Caco-2 (cell line): ENCODE measurements at regions of chr4 and their contacts with region 1.

Region 1: DNA sequence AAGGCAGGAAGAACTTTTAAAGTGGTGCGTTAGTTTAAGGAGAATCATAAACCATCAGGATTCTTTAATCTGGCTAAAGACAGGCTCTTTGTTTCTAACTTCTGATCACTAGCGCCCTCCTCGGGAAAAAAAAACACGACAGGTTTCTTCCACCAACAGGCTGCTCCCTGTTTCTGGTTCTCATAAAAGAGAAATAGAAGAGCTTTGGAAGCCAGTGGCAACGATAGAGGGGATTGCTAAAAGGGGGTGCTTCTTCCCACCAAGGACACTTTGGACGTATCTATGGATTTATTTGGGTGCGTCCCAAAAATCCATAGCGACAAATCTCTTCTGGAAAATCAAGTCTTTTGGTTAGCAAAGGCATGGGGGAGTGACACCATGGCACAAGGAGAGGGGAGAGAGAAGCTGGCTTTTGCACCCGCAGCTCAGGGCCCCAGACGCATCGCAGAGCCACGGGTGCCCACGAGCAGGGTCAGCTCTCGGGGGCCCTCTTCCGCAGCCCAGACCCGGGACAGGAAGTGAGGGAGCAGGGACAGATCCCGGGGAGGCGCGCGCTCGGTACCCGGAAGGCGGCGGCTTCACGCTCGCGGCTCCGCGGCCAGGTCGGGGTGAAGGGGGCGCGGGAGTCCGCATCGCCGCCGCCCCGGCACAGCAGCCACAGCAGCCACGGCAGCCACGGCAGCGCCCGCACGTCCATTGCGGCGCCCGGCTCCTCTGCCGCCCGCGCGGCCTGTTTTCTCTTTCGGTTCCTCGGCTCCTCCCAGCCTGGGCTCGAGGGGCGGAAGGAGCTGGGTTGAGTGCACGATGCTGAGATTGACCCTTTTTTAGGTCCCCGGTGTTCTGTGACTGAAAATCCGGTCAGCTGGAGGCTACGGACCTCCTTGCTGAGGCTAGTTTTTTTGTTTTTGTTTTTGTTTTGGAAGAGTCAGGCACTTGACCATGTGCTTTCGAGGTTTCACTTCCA is at the start of gene CTSO:
- DNase-seq: peak; percentile 76 to 78
- H3K4me3 ChIP-seq: peak within 1 kb of the TSS; percentile 59
- H3K4me3 Mint-ChIP-seq: peak within 1 kb of the TSS; percentile 99
- H3K27ac Mint-ChIP-seq: peak within 1 kb of the TSS; percentile 96
- H3K4me1 ChIP-seq: peaks cover 31% of the 10 kb centered on the region
- H3K4me1 Mint-ChIP-seq: peaks cover 12% of the 10 kb centered on the region
- H3K27me3 ChIP-seq: no peaks in the 10 kb centered on the region
- H3K27me3 Mint-ChIP-seq: no peaks in the 10 kb centered on the region
- CTCF ChIP-seq: peak; percentile 47 to 57
- total RNA-seq, gene CTSO: 2.3 and 2.9 TPM in 2 replicates

Region 2: GRCh38 chr4:155403886-155404285 is 549.5 kb before region 1 on chr4:
- CTCF ChIA-PET with region 1: no interaction called
- POLR2A ChIA-PET with region 1: no interaction called
- intact Hi-C with region 1: loop called (anchors 2 kb)
- DNase-seq: peak in 1 of 2 experiments; percentile 20
- H3K4me3 ChIP-seq: no peak overlapping the region
- H3K4me3 Mint-ChIP-seq: no peak overlapping the region
- H3K27ac Mint-ChIP-seq: no peak overlapping the region
- H3K4me1 ChIP-seq: peaks cover 18% of the 10 kb centered on the region
- H3K4me1 Mint-ChIP-seq: peaks cover 18% of the 10 kb centered on the region
- H3K27me3 ChIP-seq: no peaks in the 10 kb centered on the region
- H3K27me3 Mint-ChIP-seq: no peaks in the 10 kb centered on the region
- CTCF ChIP-seq: peak in 1 of 2 experiments; percentile 28

Region 3: DNA sequence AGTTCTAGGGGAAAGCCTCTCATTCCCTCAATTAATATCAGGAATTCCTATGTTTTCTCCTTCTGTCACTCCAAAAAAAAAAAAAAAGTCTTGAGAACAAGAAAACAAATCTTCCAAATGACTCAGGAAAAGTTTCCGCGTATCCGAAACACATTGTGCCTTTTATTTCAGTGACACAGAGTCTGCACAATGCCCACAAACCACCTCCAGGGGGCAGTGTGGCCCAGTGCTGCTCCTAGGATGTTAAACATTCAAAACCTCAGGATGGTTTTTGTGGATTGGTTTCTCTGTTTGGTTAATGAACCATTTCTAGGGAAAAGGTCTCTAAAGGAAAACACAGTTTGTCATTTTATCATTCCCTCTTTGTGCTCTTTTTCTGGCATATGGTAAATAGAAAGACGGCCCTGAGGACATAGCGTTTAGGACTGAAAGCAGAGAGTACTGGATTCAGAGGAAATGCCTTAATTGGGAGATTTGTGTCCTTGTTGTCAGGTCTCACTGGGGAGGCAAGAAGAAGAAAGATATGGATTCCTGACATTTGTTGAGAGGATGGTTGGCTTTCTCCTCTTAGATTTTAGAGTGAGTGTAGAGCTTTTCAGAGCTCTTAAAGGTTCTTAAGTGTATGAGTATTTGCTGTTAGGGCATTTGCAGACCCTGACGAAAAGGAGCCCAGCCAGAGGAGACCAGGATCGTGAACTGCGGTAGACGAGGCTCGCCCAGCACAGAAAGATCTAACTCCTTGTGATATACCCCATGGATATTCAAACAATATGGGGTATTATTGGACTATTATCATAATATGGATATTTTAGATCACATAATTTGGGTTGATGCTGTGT is 510.9 kb before region 1 on chr4:
- CTCF ChIA-PET with region 1: no interaction called
- POLR2A ChIA-PET with region 1: no interaction called
- intact Hi-C with region 1: loop called (anchors 1 kb)
- DNase-seq: peak; percentile 50 to 72
- H3K4me3 ChIP-seq: no peak overlapping the region
- H3K4me3 Mint-ChIP-seq: no peak overlapping the region
- H3K27ac Mint-ChIP-seq: no peak overlapping the region
- H3K4me1 ChIP-seq: no peaks in the 10 kb centered on the region
- H3K4me1 Mint-ChIP-seq: peaks cover 8% of the 10 kb centered on the region
- H3K27me3 ChIP-seq: no peaks in the 10 kb centered on the region
- H3K27me3 Mint-ChIP-seq: no peaks in the 10 kb centered on the region
- CTCF ChIP-seq: peak; percentile 84 to 88

Region 4: DNA sequence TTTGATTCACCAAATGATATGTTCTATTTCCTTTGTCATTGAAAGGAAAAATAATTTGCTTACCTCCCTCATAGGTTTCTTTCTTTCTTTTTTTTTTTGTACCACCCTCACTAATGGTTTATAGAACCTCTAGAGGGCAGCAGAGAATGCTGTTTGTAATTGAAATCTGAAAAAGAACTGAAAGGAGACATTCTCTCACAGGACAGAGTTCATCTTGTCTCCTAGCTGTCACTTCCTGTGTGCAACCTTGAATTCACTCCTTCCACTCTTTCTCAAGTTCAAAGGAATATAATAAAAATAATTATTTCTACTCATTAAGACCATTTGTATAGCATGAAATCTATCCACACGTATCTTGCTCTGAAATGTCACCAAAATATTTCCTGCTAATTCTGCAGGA is 143.6 kb before region 1 on chr4:
- CTCF ChIA-PET with region 1: interaction called, 19 read pairs
- POLR2A ChIA-PET with region 1: interaction called, 5 read pairs
- intact Hi-C with region 1: loop called (anchors 1 kb)
- DNase-seq: peak in 1 of 2 experiments; percentile 61
- H3K4me3 ChIP-seq: no peak overlapping the region
- H3K4me3 Mint-ChIP-seq: no peak overlapping the region
- H3K27ac Mint-ChIP-seq: no peak overlapping the region
- H3K4me1 ChIP-seq: no peaks in the 10 kb centered on the region
- H3K4me1 Mint-ChIP-seq: no peaks in the 10 kb centered on the region
- H3K27me3 ChIP-seq: no peaks in the 10 kb centered on the region
- H3K27me3 Mint-ChIP-seq: no peaks in the 10 kb centered on the region
- CTCF ChIP-seq: peak; percentile 48 to 61